Activated CD8-positive, alpha-beta T cell treated with anti-CD3 and anti-CD28 coated beads for 36 hours (primary cell): ENCODE measurements at regions of chr16 and their contacts with region 1.

Region 1: GRCh38 chr16:57000271-57001025 is 11.1 kb downstream of the NLRC5 start:
- DNase-seq: peak; percentile 88
- ATAC-seq: peak; percentile 84
- H3K4me3 Mint-ChIP-seq: peak overlapping the region; percentile 51
- H3K27ac Mint-ChIP-seq: peak overlapping the region; percentile 99
- H3K4me1 Mint-ChIP-seq: peaks cover 94% of the 10 kb centered on the region
- H3K27me3 Mint-ChIP-seq: no peaks in the 10 kb centered on the region
- CTCF ChIP-seq: no peak

Region 2: DNA sequence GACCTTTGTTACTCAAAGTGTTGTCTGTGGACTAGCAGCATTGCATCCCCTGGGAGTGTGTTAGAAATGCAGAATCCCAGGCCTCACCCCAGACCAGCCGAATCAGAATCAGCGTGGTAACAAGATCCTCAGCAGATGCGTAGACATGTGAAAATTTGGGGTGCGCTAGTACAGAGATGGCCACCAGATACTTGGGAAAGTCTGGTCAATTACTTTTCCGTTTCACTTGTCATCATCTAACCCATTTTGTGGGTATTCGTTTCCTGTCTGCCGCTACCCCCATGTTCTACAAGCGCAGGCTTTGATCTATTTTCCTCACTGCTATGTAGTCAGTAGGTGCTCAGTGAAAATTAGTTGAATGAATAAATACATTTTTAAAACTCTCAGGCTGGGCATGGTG is 101.6 kb before region 1 on chr16:
- CTCF ChIA-PET with region 1: no interaction called
- POLR2A ChIA-PET with region 1: no interaction called
- intact Hi-C with region 1: no loop called
- DNase-seq: peak; percentile 42
- ATAC-seq: peak; percentile 83
- H3K4me3 Mint-ChIP-seq: no peak overlapping the region
- H3K27ac Mint-ChIP-seq: no peak overlapping the region
- H3K4me1 Mint-ChIP-seq: peaks cover 18% of the 10 kb centered on the region
- H3K27me3 Mint-ChIP-seq: peaks cover 3% of the 10 kb centered on the region
- CTCF ChIP-seq: no peak

Region 3: DNA sequence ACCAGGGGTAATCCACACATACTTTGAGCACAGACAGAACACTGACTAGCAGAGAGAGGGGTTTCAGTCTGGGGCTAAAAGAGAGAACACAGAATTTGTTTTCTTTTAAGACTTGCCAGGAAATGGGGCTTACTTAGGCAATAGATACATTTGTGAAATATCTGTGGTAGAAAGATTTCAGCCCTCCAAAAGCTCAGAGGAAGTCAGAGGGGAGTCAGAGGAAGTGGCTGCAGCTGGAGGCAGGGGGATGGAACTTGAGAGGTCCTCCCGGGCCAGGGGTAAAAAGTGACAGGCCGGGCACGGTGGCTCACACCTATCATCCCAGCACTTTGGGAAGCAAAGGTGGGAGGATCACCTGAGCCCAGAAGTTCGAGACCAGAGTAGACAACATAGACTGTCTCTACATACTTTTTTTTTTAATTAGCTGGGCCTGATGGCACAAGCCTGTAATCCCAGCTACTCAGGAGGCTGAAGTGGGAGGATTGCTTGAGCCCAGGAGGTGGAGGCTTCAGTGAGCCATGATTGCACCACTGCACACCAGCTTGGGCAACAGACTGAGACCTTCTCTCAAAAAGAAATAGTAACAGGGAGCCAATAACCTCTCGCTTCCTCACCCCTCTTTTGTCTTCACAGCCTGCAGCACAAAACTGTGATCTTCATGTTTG is 38.8 kb after region 1 on chr16:
- CTCF ChIA-PET with region 1: interaction called, 5 read pairs
- POLR2A ChIA-PET with region 1: interaction called, 208 read pairs
- intact Hi-C with region 1: no loop called
- DNase-seq: peak; percentile 74
- ATAC-seq: peak; percentile 22
- H3K4me3 Mint-ChIP-seq: peak overlapping the region; percentile 46
- H3K27ac Mint-ChIP-seq: peak overlapping the region; percentile 99
- H3K4me1 Mint-ChIP-seq: peaks cover 89% of the 10 kb centered on the region
- H3K27me3 Mint-ChIP-seq: no peaks in the 10 kb centered on the region
- CTCF ChIP-seq: no peak